Gastrocnemius medialis (tissue), 4 donors: ENCODE measurements at regions of chr17 and their contacts with region 1.

Region 1: GRCh38 chr17:72465191-72466024 is 344.6 kb downstream of the SOX9 start:
- DNase-seq: no peak
- ATAC-seq: no peak
- H3K4me3 ChIP-seq: no peak overlapping the region
- H3K27ac ChIP-seq: no peak overlapping the region
- H3K4me1 ChIP-seq: no peaks in the 10 kb centered on the region
- H3K27me3 ChIP-seq: no peaks in the 10 kb centered on the region
- CTCF ChIP-seq: no peak
- POLR2A ChIP-seq: no peak

Region 2: DNA sequence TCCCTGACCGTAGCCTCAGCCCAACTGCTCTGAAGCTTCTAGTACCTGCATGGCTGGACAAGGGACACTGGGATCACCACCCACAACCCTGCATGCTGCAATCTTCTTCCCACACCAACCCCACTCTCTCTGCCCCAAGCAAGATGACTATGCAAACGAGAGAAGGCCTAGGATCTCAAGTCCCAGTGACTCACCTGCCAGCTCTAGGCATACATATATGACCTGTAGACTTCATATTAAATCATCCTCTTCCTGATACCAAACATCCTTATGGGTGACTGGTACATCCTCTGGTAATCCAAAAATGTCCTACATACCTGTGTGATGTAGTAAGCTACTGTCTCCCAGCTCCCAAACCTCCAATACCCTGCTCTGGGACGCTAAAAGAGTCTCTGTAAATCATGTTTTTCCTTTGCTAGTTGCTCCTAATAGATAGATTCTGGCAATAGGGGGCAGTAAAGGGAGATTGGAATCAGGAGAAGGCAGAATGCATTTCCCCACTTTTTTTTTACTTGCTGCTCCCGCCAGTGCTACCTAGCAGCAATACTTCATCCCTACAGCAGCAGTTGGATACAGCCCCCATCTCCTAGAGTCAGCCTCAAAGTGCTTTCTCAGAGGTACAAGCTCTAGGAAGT is 388.0 kb before region 1 on chr17:
- in situ Hi-C with region 1: no loop called
- intact Hi-C with region 1: no loop called
- DNase-seq: no peak
- ATAC-seq: no peak
- H3K4me3 ChIP-seq: no peak overlapping the region
- H3K27ac ChIP-seq: no peak overlapping the region
- H3K4me1 ChIP-seq: no peaks in the 10 kb centered on the region
- H3K27me3 ChIP-seq: no peaks in the 10 kb centered on the region
- CTCF ChIP-seq: no peak
- POLR2A ChIP-seq: no peak

Region 3: GRCh38 chr17:72373910-72374741 is 91.3 kb before region 1 on chr17:
- in situ Hi-C with region 1: loop called in 1 of 4 experiments (anchors 25 kb)
- intact Hi-C with region 1: no loop called
- DNase-seq: peak; percentile 15 to 39
- ATAC-seq: peak; percentile 66 to 72
- H3K4me3 ChIP-seq: no peak overlapping the region
- H3K27ac ChIP-seq: peak overlapping the region in 2 of 4 donors; percentile 21
- H3K4me1 ChIP-seq: peaks cover 7 to 10% of the 10 kb centered on the region in 2 donors
- H3K27me3 ChIP-seq: no peaks in the 10 kb centered on the region
- CTCF ChIP-seq: no peak
- POLR2A ChIP-seq: no peak

Region 4: DNA sequence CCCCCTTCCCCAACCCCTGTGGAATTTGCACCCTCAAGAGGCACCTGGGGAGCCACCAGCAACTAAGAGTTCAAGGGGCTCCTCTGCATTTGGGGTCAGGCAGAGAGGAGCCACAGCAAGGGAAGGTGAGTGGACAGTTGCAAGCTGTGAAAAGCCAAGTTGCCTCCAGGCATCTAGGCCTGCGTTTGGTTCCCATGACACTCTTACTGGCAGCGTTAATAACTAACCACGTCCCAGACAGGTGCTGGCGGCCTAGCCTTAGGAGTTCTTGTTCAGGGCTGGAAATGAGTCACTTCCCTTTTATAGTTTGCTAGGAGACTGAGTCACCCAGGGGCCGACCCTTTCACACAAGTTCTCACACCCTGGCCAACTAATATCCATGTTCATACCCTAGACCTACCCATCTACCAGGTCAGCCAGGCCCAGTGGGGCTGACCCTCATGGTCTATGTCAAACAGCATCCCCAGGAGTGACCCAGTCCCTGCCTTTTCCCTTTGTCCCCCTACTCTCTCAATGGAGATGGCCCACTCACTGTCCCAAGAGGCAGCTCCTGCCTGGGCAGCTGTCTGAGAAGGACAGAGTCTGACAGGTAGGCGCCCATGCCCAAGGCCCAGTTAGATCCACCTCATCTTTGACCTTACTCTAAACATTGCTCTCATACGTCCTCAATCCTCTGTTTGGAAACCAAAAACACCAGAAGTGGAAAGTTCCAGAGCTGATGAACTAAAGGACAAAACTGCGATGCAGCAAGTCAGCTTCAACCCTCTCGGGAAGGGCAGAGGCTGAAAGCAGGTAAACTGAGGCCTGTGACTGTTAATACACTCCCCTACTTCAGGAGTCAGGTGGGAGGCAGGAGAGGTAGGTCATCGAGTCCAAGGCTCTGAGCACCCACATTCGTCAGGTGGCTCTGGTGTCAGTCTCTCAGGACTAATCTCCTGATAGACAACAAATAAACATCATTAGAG is 44.0 kb before region 1 on chr17:
- in situ Hi-C with region 1: no loop called
- intact Hi-C with region 1: no loop called
- DNase-seq: peak; percentile 46 to 73
- ATAC-seq: peak; percentile 80 to 90
- H3K4me3 ChIP-seq: no peak overlapping the region
- H3K27ac ChIP-seq: peak overlapping the region; percentile 11 to 64 (median 13)
- H3K4me1 ChIP-seq: peaks cover 0 to 11% of the 10 kb centered on the region in 2 donors
- H3K27me3 ChIP-seq: peaks cover 0 to 6% (median 0%) of the 10 kb centered on the region in 3 donors
- CTCF ChIP-seq: no peak
- POLR2A ChIP-seq: no peak